ENCODE measurements at regions of chr16 and their contacts with region 1.

Region 1: DNA sequence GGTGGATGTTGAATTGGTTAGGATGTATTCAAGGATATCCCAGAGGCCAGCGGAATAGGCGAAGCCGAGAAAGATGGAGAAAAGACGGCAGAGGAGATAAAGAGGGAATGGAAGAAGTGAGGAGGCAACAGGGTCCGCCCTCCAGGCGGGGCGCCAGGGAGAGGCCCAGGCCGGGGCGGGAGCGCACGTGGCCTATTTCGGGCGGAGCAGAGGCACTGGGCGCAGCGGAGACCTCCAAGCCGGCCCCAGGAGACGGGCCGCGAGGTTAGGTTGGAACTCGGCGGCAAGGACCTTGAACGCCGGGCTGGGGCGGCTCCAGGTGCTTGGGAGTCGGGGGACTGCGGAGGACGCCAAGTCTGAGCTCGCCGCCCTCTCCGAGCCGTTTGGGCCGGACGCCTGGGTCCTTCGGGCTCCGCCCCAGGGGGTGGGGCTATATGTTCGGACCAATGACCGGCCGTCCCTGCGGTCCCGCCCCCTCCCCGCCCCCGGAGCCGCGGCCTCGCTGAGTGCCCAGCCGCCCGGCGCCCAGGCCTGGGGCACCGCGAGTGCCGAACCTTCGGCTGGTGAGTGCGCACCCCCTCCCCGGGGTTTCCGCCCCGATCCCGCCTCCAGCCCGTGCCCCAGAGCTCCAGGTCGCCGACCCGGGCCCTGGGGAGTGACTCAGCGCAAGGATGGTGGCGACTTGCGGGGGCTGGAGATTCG is at the start of gene ZNF771:
- DNase-seq: peak; percentile 76 to 85 (median 81)
- H3K4me3 ChIP-seq: peak within 1 kb of the TSS; percentile 42 to 65
- H3K4me3 Mint-ChIP-seq: peak within 1 kb of the TSS; percentile 91 to 100 (median 97)
- H3K27ac ChIP-seq: peak within 1 kb of the TSS; percentile 59
- H3K27ac Mint-ChIP-seq: peak within 1 kb of the TSS; percentile 88 to 95 (median 93)
- H3K4me1 ChIP-seq: peaks cover 24% of the 10 kb centered on the region
- H3K4me1 Mint-ChIP-seq: peaks cover 19 to 33% (median 24%) of the 10 kb centered on the region in 4 donors
- H3K27me3 ChIP-seq: no peaks in the 10 kb centered on the region
- H3K27me3 Mint-ChIP-seq: no peaks in the 10 kb centered on the region
- total RNA-seq, gene ZNF771: 6.0 to 6.5 TPM

Region 2: GRCh38 chr16:30065143-30065850 is 342.0 kb before region 1 on chr16 and contains the start of gene ALDOA:
- CTCF ChIA-PET with region 1: interaction called, 3 read pairs
- POLR2A ChIA-PET with region 1: interaction called, 8 read pairs
- intact Hi-C with region 1: loop called (anchors 1 kb)
- DNase-seq: peak; percentile 94 to 96 (median 94)
- H3K4me3 ChIP-seq: peak within 1 kb of the TSS; percentile 77 to 93
- H3K4me3 Mint-ChIP-seq: peak within 1 kb of the TSS; percentile 98 to 100 (median 99)
- H3K27ac ChIP-seq: peak within 1 kb of the TSS; percentile 94
- H3K27ac Mint-ChIP-seq: peak within 1 kb of the TSS; percentile 95 to 100 (median 97)
- H3K4me1 ChIP-seq: peaks cover 47% of the 10 kb centered on the region
- H3K4me1 Mint-ChIP-seq: peaks cover 17 to 58% (median 33%) of the 10 kb centered on the region in 4 donors
- H3K27me3 ChIP-seq: no peaks in the 10 kb centered on the region
- H3K27me3 Mint-ChIP-seq: no peaks in the 10 kb centered on the region
- total RNA-seq, gene ALDOA: 558 to 563 TPM

Region 3: DNA sequence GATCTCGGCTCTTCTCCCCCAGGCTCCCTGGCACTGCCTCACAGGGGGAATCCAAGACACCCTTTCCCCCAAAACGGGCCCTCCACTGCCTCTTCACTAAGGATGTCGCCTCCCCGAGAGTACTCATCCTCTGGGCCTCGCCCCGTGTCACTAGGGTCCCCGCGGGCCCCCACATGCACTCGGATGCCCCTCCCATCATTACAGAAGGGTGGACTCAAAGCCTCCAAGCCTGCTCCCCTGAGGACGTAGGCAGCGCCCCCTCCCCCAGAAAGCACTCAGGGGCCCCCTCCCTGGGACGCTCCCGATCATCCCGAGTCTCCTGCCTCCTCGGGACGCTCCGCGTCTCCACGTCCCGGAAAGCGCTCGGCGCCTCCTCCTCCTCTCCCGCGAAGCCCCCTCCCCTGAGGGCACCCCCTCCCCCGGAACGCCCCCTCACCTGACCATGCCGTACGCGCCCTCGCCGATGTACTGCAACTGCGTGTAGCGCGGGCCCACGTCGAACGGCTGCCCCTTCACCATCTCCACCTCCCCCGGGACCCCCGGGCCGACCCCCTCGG is 284.6 kb before region 1 on chr16:
- CTCF ChIA-PET with region 1: no interaction called
- POLR2A ChIA-PET with region 1: no interaction called
- intact Hi-C with region 1: loop called (anchors 10 kb)
- DNase-seq: peak in 1 of 5 donors; percentile 54
- H3K4me3 ChIP-seq: peak overlapping the region; percentile 52 to 82
- H3K4me3 Mint-ChIP-seq: peak overlapping the region; percentile 86 to 92 (median 90)
- H3K27ac ChIP-seq: peak overlapping the region; percentile 70
- H3K27ac Mint-ChIP-seq: peak overlapping the region; percentile 81 to 93 (median 88)
- H3K4me1 ChIP-seq: peaks cover 25% of the 10 kb centered on the region
- H3K4me1 Mint-ChIP-seq: peaks cover 8 to 38% (median 20%) of the 10 kb centered on the region in 4 donors
- H3K27me3 ChIP-seq: no peaks in the 10 kb centered on the region
- H3K27me3 Mint-ChIP-seq: no peaks in the 10 kb centered on the region

Region 4: GRCh38 chr16:30355144-30355894 is 51.9 kb before region 1 on chr16 and contains the start of gene CD2BP2:
- CTCF ChIA-PET with region 1: interaction called, 13 read pairs
- POLR2A ChIA-PET with region 1: interaction called, 11 read pairs
- intact Hi-C with region 1: no loop called
- DNase-seq: peak; percentile 84 to 87 (median 86)
- H3K4me3 ChIP-seq: peak within 1 kb of the TSS; percentile 94 to 98
- H3K4me3 Mint-ChIP-seq: peak within 1 kb of the TSS; percentile 90 to 98 (median 96)
- H3K27ac ChIP-seq: peak within 1 kb of the TSS; percentile 95
- H3K27ac Mint-ChIP-seq: peak within 1 kb of the TSS; percentile 96 to 99 (median 98)
- H3K4me1 ChIP-seq: peaks cover 32% of the 10 kb centered on the region
- H3K4me1 Mint-ChIP-seq: peaks cover 13 to 46% (median 26%) of the 10 kb centered on the region in 4 donors
- H3K27me3 ChIP-seq: no peaks in the 10 kb centered on the region
- H3K27me3 Mint-ChIP-seq: no peaks in the 10 kb centered on the region
- total RNA-seq, gene CD2BP2: 72.9 to 79.4 TPM

Region 5: GRCh38 chr16:30395155-30395991 is 11.9 kb before region 1 on chr16 and contains the start of gene ZNF48:
- CTCF ChIA-PET with region 1: interaction called, 14 read pairs
- POLR2A ChIA-PET with region 1: interaction called, 41 read pairs
- intact Hi-C with region 1: no loop called
- DNase-seq: peak in 4 of 5 donors; percentile 44 to 65 (median 53)
- H3K4me3 ChIP-seq: peak within 1 kb of the TSS; percentile 18 to 73
- H3K4me3 Mint-ChIP-seq: peak within 1 kb of the TSS; percentile 83 to 96 (median 89)
- H3K27ac ChIP-seq: peak within 1 kb of the TSS; percentile 56
- H3K27ac Mint-ChIP-seq: peak within 1 kb of the TSS; percentile 58 to 92 (median 84)
- H3K4me1 ChIP-seq: peaks cover 32% of the 10 kb centered on the region
- H3K4me1 Mint-ChIP-seq: peaks cover 15 to 39% (median 26%) of the 10 kb centered on the region in 4 donors
- H3K27me3 ChIP-seq: no peaks in the 10 kb centered on the region
- H3K27me3 Mint-ChIP-seq: no peaks in the 10 kb centered on the region
- total RNA-seq, gene ZNF48: 15.8 to 16.7 TPM

Region 6: GRCh38 chr16:30941600-30942425 is 534.6 kb after region 1 on chr16:
- CTCF ChIA-PET with region 1: no interaction called
- POLR2A ChIA-PET with region 1: no interaction called
- intact Hi-C with region 1: no loop called
- DNase-seq: peak; percentile 46 to 60 (median 59)
- H3K4me3 ChIP-seq: peak overlapping the region in 1 of 2 donors; percentile 22
- H3K4me3 Mint-ChIP-seq: peak overlapping the region in 3 of 8 donors; percentile 15 to 29 (median 29)
- H3K27ac ChIP-seq: no peak overlapping the region
- H3K27ac Mint-ChIP-seq: peak overlapping the region in 4 of 7 donors; percentile 5 to 78 (median 49)
- H3K4me1 ChIP-seq: peaks cover 9% of the 10 kb centered on the region
- H3K4me1 Mint-ChIP-seq: peaks cover 9 to 24% (median 21%) of the 10 kb centered on the region in 4 donors
- H3K27me3 ChIP-seq: no peaks in the 10 kb centered on the region
- H3K27me3 Mint-ChIP-seq: no peaks in the 10 kb centered on the region

Measured in CD4-positive, alpha-beta memory T cell (primary cell).